ENCODE measurements at regions of chr18 and their contacts with region 1.

Region 1: DNA sequence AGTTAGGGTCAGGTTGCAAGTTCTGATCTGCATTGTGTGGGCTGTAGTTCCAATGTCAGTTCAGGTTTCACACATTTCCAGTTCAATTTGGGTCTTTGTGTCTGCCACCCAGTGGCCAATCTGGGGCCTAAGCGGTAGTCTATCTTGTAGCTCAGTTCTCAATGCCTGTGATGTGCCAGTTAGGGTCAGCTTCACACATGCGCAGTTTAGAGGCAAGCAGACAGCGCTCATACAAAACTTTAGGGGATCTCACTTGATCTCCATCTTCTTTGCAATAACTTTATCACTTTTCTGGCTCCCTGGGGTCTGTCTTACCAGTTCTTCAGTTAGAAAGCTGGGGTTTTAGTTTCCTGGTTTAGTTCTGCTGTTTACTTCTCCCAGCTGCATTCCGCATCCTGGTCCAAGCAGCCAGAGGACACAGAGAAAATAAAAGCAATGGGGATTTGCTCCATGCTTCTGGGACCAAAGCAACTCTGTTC is 11.0 kb upstream of the ZNF24 start:
- DNase-seq: peak; percentile 69
- H3K4me3 Mint-ChIP-seq: no peak overlapping the region
- H3K27ac Mint-ChIP-seq: no peak overlapping the region
- H3K4me1 Mint-ChIP-seq: no peaks in the 10 kb centered on the region
- H3K27me3 Mint-ChIP-seq: no peaks in the 10 kb centered on the region

Region 2: DNA sequence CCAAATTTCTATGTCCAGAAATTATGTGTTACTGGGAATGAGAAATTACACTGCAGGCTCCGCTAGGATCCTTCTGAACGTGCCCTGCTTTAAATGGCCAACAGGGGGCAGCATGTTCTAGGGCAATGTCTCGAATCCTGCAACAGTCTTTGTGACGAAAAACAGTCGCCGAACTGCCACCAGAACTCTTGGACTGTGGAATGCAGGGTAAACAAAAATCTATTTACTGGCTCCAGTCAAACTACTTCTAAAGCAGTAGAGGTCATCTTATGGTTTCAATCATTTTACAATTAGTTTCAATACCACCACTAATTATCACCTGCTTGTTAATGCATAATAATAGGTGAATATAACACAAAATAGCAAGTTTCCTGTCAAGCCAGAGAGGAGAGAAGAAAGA is 124.1 kb before region 1 on chr18:
- CTCF ChIA-PET with region 1: interaction called, 18 read pairs
- DNase-seq: peak; percentile 86
- H3K4me3 Mint-ChIP-seq: peak overlapping the region; percentile 2
- H3K27ac Mint-ChIP-seq: no peak overlapping the region
- H3K4me1 Mint-ChIP-seq: peaks cover 3% of the 10 kb centered on the region
- H3K27me3 Mint-ChIP-seq: no peaks in the 10 kb centered on the region

Measured in activated naive CD4-positive, alpha-beta T cell treated with anti-CD3 and anti-CD28 coated beads, Interleukin-2, amount 10 ng/mL, durations not matched to agents 7 days and 5 days (primary cell).